K562 (cell line): ENCODE measurements at regions of chr4 and their contacts with region 1.

Region 1: DNA sequence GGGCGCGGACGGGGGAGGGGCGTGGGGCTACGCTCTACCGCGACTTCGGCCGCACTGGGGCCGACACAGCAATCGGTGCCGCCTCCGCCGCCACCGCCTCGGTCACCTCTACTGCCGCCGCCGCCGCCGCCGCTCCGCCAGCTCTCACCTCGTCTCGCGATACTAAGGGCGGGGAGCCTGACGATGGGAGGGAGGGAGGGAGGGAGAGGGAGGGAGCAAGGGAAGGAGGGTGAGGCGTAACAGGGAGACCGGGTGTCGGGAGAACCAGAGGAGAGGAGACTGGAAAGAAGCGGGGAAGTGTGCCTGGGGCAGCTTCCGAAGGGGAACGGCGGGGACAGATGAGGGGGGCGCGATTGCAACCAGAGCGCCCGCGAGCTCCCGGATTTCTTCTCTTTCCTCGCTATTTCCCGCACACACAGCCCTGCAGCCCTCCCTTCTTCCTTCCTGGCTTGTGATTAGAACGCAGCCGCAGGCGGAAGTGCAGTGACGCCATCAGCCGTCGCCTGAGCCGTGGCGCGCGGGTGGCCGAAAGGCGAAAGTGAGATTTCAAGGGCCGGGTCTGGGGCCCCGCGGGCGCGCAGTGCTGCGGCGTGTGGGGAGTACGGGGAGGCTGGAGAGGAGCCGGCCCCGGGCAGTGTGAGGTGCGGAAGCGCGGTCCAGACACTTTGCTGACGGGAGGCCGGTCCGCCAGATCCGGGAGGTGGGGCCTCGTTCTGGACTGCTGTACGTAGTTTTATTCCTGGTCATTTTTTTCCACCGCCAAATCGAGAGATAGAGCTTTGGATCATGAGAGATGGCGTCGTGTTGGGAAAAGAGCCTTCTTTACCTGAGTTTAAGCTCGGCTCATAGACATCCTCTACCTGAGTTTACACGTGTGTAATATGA is at the start of gene ANKRD17:
- DNase-seq: peak; percentile 76 to 94 (median 84)
- ATAC-seq: peak; percentile 82
- H3K4me3 ChIP-seq: peak within 1 kb of the TSS; percentile 97
- H3K27ac ChIP-seq: peak within 1 kb of the TSS; percentile 97
- H3K4me1 ChIP-seq: no peaks in the 10 kb centered on the region
- H3K27me3 ChIP-seq: no peaks in the 10 kb centered on the region
- CTCF ChIP-seq: peak in 1 of 3 experiments; percentile 21; a peak in 1 of 6 replicates
- EP300 ChIP-seq: peak; percentile 56; the same call in 1 of the 2 replicates
- POLR2A ChIP-seq: peak; percentile 98
- RAD21 ChIP-seq: no peak
- polyA plus RNA-seq, gene ANKRD17: 25.5 to 26.9 TPM

Region 2: GRCh38 chr4:72326692-72327632 is 932.0 kb before region 1 on chr4:
- CTCF ChIA-PET with region 1: no interaction called
- POLR2A ChIA-PET with region 1: no interaction called
- in situ Hi-C with region 1: no loop called
- intact Hi-C with region 1: loop called (anchors 10 kb)
- DNase-seq: peak in 2 of 4 experiments; percentile 29 to 43
- ATAC-seq: peak; percentile 57; the same call in 2 of the 3 replicates
- H3K4me3 ChIP-seq: no peak overlapping the region
- H3K27ac ChIP-seq: no peak overlapping the region
- H3K4me1 ChIP-seq: no peaks in the 10 kb centered on the region
- H3K27me3 ChIP-seq: no peaks in the 10 kb centered on the region
- CTCF ChIP-seq: peak; percentile 50 to 70 (median 53); a peak in 4 of 6 replicates
- EP300 ChIP-seq: no peak
- POLR2A ChIP-seq: no peak
- RAD21 ChIP-seq: peak; percentile 69 to 73

Region 3: GRCh38 chr4:73069338-73070073 is 189.4 kb before region 1 on chr4 and contains the start of gene COX18:
- CTCF ChIA-PET with region 1: no interaction called
- POLR2A ChIA-PET with region 1: interaction called, 9 read pairs
- in situ Hi-C with region 1: no loop called
- intact Hi-C with region 1: loop called (anchors 2 kb)
- DNase-seq: peak; percentile 93 to 99 (median 94)
- ATAC-seq: peak; percentile 92
- H3K4me3 ChIP-seq: peak within 1 kb of the TSS; percentile 65
- H3K27ac ChIP-seq: peak within 1 kb of the TSS; percentile 91
- H3K4me1 ChIP-seq: peaks cover 5 to 23% of the 10 kb centered on the region in 2 experiments; a peak in 4 of 5 replicates
- H3K27me3 ChIP-seq: no peaks in the 10 kb centered on the region
- CTCF ChIP-seq: peak in 1 of 3 experiments; percentile 13; a peak in 1 of 6 replicates
- EP300 ChIP-seq: peak; percentile 47; the same call in 1 of the 2 replicates
- POLR2A ChIP-seq: peak; percentile 94
- RAD21 ChIP-seq: no peak
- polyA plus RNA-seq, gene COX18: 7.0 to 7.2 TPM

Region 4: GRCh38 chr4:73127839-73128453 is 131.0 kb before region 1 on chr4:
- CTCF ChIA-PET with region 1: no interaction called
- POLR2A ChIA-PET with region 1: no interaction called
- in situ Hi-C with region 1: no loop called
- intact Hi-C with region 1: loop called (anchors 5 kb)
- DNase-seq: peak in 2 of 4 experiments; percentile 13 to 16
- ATAC-seq: peak; percentile 89
- H3K4me3 ChIP-seq: no peak overlapping the region
- H3K27ac ChIP-seq: no peak overlapping the region
- H3K4me1 ChIP-seq: no peaks in the 10 kb centered on the region
- H3K27me3 ChIP-seq: no peaks in the 10 kb centered on the region
- CTCF ChIP-seq: peak; percentile 8 to 26 (median 24); a peak in 2 of 6 replicates
- EP300 ChIP-seq: no peak
- POLR2A ChIP-seq: no peak
- RAD21 ChIP-seq: peak in 1 of 2 experiments; percentile 16; a peak in 2 of 4 replicates

Region 5: DNA sequence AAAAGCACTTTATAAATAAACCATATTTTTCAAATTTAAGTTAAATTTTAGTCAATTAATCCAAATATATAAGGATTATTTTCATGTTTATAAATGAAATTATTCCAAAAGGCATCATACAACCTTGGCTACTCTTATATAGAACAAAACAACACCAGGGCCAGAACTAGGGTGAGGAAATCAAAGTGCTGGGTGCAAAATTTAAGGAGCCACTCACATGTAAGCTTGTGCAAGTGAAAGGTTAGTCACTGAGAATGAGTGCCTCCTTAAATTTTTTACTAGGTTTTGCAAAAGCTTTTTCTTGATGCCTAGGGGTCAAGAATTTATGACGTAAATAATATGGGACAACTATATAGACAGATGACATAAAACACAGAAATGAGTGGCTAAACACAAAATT is 106.0 kb before region 1 on chr4:
- CTCF ChIA-PET with region 1: no interaction called
- POLR2A ChIA-PET with region 1: no interaction called
- in situ Hi-C with region 1: no loop called
- intact Hi-C with region 1: loop called (anchors 5 kb)
- DNase-seq: no peak
- ATAC-seq: no peak
- H3K4me3 ChIP-seq: no peak overlapping the region
- H3K27ac ChIP-seq: no peak overlapping the region
- H3K4me1 ChIP-seq: no peaks in the 10 kb centered on the region
- H3K27me3 ChIP-seq: no peaks in the 10 kb centered on the region
- CTCF ChIP-seq: no peak
- EP300 ChIP-seq: no peak
- POLR2A ChIP-seq: no peak
- RAD21 ChIP-seq: no peak

Region 6: GRCh38 chr4:73222466-73223257 is 36.3 kb before region 1 on chr4:
- CTCF ChIA-PET with region 1: no interaction called
- POLR2A ChIA-PET with region 1: interaction called, 4 read pairs
- in situ Hi-C with region 1: no loop called
- intact Hi-C with region 1: loop called (anchors 5 kb)
- DNase-seq: peak; percentile 35 to 91 (median 62)
- ATAC-seq: peak; percentile 94
- H3K4me3 ChIP-seq: peak overlapping the region; percentile 56
- H3K27ac ChIP-seq: peak overlapping the region; percentile 96
- H3K4me1 ChIP-seq: peaks cover 0 to 3% of the 10 kb centered on the region in 2 experiments; a peak in 2 of 5 replicates
- H3K27me3 ChIP-seq: no peaks in the 10 kb centered on the region
- CTCF ChIP-seq: no peak; a peak in 1 of 6 replicates
- EP300 ChIP-seq: peak; percentile 57; the same call in 1 of the 2 replicates
- POLR2A ChIP-seq: peak; percentile 97
- RAD21 ChIP-seq: no peak

Region 7: DNA sequence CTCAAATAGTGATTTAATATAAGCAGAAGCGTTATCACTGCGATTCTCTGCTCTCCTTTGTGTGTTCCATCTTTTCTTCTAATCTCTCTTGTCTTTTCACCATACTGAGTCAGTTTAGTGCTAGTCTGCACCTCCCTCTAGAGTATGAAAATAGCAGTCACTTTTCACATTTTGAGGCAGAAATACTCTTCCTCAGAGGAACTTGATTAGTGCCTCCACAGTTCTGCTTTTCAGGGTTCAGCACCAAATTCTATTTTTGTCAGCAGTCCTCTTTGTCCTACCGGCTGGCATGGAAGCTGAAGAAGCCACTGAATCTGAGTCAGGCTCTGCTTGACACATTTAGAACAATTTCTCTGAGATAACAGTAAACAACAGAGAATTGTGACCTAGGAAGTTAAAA is 49.4 kb after region 1 on chr4:
- CTCF ChIA-PET with region 1: no interaction called
- POLR2A ChIA-PET with region 1: no interaction called
- in situ Hi-C with region 1: no loop called
- intact Hi-C with region 1: loop called (anchors 5 kb)
- DNase-seq: peak in 1 of 4 experiments; percentile 35
- ATAC-seq: peak; percentile 78
- H3K4me3 ChIP-seq: no peak overlapping the region
- H3K27ac ChIP-seq: no peak overlapping the region
- H3K4me1 ChIP-seq: no peaks in the 10 kb centered on the region
- H3K27me3 ChIP-seq: no peaks in the 10 kb centered on the region
- CTCF ChIP-seq: peak; percentile 44 to 56 (median 49); a peak in 5 of 6 replicates
- EP300 ChIP-seq: no peak
- POLR2A ChIP-seq: no peak
- RAD21 ChIP-seq: peak; percentile 31 to 63; a peak in 3 of 4 replicates